ENCODE measurements at regions of chr9 and their contacts with region 1.

Region 1: DNA sequence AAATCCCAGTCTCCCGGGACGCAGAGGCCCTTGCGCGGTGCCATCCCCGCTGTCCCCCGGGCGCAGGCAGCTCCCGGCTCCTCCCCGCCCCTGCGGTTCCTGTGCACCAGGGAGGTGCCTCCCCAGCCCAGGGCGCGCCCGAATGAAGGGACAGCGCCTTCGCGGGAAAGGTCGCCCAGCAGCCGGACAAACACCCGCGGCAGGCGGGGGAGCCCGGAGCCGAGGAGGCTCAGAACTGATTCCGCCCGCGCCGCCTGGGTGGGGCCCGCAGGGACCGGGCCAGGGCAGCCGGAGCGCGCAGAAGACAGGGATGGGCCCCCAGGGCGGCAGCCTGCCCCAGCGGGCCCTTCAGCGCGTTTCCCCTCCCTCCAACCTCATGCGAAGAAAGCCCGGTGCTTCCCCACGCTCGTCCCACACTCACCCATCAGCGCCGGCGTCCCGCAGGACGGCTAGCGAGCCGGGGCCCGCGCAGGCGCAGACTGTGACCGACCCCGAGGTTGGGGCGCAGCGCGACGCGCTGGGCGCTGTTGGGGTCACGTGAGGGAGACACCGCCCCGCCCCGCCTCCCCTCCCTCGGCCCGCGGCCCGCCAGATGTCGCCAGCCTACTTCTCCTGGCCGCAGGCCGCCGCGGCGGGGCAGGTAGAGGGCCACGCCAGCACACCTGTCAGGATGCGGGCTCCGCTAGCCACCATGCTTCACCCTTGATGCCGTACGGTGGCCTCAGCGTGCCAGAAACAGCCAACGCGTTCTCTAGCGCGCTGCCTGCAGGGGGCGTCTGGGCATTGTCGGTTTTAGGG is at the start of gene SLC25A51:
- DNase-seq: peak; percentile 91
- H3K4me3 ChIP-seq: peak within 1 kb of the TSS; percentile 86
- H3K27ac ChIP-seq: peak within 1 kb of the TSS; percentile 59
- H3K4me1 ChIP-seq: peaks cover 29% of the 10 kb centered on the region
- H3K27me3 ChIP-seq: no peaks in the 10 kb centered on the region
- total RNA-seq, gene SLC25A51: 56.6 and 58.2 TPM in 2 replicates

Region 2: GRCh38 chr9:36980148-36980974 is 923.5 kb before region 1 on chr9:
- in situ Hi-C with region 1: no loop called
- DNase-seq: no peak
- H3K4me3 ChIP-seq: no peak overlapping the region
- H3K27ac ChIP-seq: no peak overlapping the region
- H3K4me1 ChIP-seq: no peaks in the 10 kb centered on the region
- H3K27me3 ChIP-seq: peaks cover 54% of the 10 kb centered on the region

Region 3: DNA sequence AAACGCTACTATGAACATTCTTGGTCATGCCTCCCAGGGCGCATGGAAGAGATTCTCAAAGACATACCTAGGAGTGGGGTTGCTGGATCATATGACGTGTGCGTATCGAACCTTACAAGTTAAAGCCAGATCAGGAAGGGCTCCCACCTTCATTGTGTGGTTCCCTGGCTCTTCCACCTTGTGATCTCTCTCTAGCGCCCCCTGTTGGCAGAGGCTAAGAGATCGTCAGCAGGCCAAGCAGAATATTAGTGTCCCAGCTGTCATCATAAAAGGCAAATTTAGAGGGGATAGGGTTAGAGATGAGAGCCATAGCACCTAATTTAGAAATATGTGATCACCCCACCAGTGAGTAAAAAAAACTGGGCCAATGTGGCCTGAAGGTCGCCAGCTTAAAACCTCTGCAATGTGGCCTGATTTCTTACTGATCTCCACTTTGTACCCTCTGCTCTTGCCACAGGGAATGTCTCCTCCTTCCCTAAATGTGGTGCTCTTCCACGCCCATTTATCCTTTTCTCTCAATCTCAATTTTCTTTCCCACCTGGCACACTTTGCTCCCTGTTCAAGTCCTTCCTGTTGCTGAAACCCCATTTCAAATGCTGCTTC is 256.9 kb after region 1 on chr9:
- in situ Hi-C with region 1: loop called (anchors 10 kb)
- DNase-seq: peak; percentile 72
- H3K4me3 ChIP-seq: no peak overlapping the region
- H3K27ac ChIP-seq: no peak overlapping the region
- H3K4me1 ChIP-seq: no peaks in the 10 kb centered on the region
- H3K27me3 ChIP-seq: peaks cover 8% of the 10 kb centered on the region; the same call in 1 of the 2 replicates

Region 4: GRCh38 chr9:38311382-38312270 is 407.8 kb after region 1 on chr9:
- in situ Hi-C with region 1: no loop called
- DNase-seq: no peak
- H3K4me3 ChIP-seq: no peak overlapping the region
- H3K27ac ChIP-seq: no peak overlapping the region
- H3K4me1 ChIP-seq: no peaks in the 10 kb centered on the region
- H3K27me3 ChIP-seq: peaks cover 74% of the 10 kb centered on the region

Region 5: GRCh38 chr9:38346811-38347210 is 443.0 kb after region 1 on chr9:
- in situ Hi-C with region 1: loop called (anchors 10 kb)
- DNase-seq: no peak
- H3K4me3 ChIP-seq: no peak overlapping the region
- H3K27ac ChIP-seq: no peak overlapping the region
- H3K4me1 ChIP-seq: no peaks in the 10 kb centered on the region
- H3K27me3 ChIP-seq: peaks cover 63% of the 10 kb centered on the region

Measured in GM23248 (cell line).